Prostate gland (tissue), 2 donors: ENCODE measurements at regions of chr3 and their contacts with region 1.

Region 1: DNA sequence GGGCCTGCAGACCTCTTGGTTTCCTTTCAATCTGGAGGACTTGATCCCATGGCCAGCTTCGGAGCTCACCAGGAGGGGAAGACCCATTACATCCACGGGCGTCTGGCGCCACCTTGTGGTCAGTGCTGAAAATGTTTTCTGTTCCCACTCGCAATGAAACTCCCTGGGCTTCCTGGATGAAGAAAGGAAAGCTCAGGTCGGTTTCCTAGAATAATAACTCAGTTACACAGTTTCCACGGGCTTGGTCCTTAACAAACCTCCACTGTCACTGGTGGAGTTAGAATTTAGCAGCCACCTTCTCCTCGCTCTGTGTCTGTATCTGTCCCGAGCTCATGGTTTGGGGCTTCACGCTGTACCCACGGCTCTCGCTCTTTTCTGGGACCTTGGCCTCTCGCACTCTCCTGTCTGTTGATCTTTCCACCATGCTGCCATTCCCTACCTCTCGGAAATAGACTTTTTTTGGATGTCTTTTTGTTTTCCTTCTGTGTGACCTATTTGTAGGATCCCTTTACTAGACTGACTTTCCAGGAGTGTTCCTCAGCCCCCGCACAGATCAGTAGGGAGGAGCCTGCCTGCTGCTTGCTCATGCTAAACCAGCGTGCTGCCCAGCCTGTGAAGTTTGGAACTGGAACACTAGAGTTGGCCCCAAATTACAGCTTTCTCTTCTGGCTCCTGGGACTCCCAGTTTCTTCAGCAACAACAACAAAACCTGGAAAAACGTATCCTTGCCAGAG is 56.3 kb downstream of the IL20RB start:
- DNase-seq: peak; percentile 92
- H3K4me3 ChIP-seq: peak overlapping the region; percentile 23 to 35
- H3K27ac ChIP-seq: peak overlapping the region; percentile 64 to 65
- H3K4me1 ChIP-seq: no peaks in the 10 kb centered on the region
- H3K27me3 ChIP-seq: no peaks in the 10 kb centered on the region
- CTCF ChIP-seq: peak; percentile 88 to 98 (median 95)
- POLR2A ChIP-seq: no peak

Region 2: GRCh38 chr3:135965506-135966270 is 1048.4 kb before region 1 on chr3 and contains the start of gene PPP2R3A:
- intact Hi-C with region 1: loop called (anchors 10 kb)
- DNase-seq: peak; percentile 74
- H3K4me3 ChIP-seq: peak within 1 kb of the TSS; percentile 70 to 79
- H3K27ac ChIP-seq: peak within 1 kb of the TSS; percentile 89 to 93
- H3K4me1 ChIP-seq: no peaks in the 10 kb centered on the region
- H3K27me3 ChIP-seq: no peaks in the 10 kb centered on the region
- CTCF ChIP-seq: peak in 1 of 4 experiments; percentile 1
- POLR2A ChIP-seq: peak; percentile 60
- total RNA-seq, gene PPP2R3A: 9.0 to 25.9 TPM

Region 3: GRCh38 chr3:136075218-136075808 is 938.8 kb before region 1 on chr3:
- intact Hi-C with region 1: loop called (anchors 5 kb)
- DNase-seq: peak; percentile 69
- H3K4me3 ChIP-seq: no peak overlapping the region
- H3K27ac ChIP-seq: no peak overlapping the region
- H3K4me1 ChIP-seq: no peaks in the 10 kb centered on the region
- H3K27me3 ChIP-seq: no peaks in the 10 kb centered on the region
- CTCF ChIP-seq: peak; percentile 85 to 93 (median 91)
- POLR2A ChIP-seq: no peak

Region 4: GRCh38 chr3:136396916-136397315 is 617.2 kb before region 1 on chr3:
- intact Hi-C with region 1: loop called (anchors 10 kb)
- DNase-seq: no peak
- H3K4me3 ChIP-seq: no peak overlapping the region
- H3K27ac ChIP-seq: no peak overlapping the region
- H3K4me1 ChIP-seq: no peaks in the 10 kb centered on the region
- H3K27me3 ChIP-seq: no peaks in the 10 kb centered on the region
- CTCF ChIP-seq: no peak
- POLR2A ChIP-seq: no peak

Region 5: GRCh38 chr3:136545664-136546268 is 468.4 kb before region 1 on chr3:
- intact Hi-C with region 1: loop called (anchors 10 kb)
- DNase-seq: no peak
- H3K4me3 ChIP-seq: no peak overlapping the region
- H3K27ac ChIP-seq: no peak overlapping the region
- H3K4me1 ChIP-seq: no peaks in the 10 kb centered on the region
- H3K27me3 ChIP-seq: no peaks in the 10 kb centered on the region
- CTCF ChIP-seq: no peak
- POLR2A ChIP-seq: no peak

Region 6: GRCh38 chr3:136882572-136882971 is 131.6 kb before region 1 on chr3:
- intact Hi-C with region 1: no loop called
- DNase-seq: no peak
- H3K4me3 ChIP-seq: no peak overlapping the region
- H3K27ac ChIP-seq: no peak overlapping the region
- H3K4me1 ChIP-seq: peaks cover 5% of the 10 kb centered on the region
- H3K27me3 ChIP-seq: no peaks in the 10 kb centered on the region
- CTCF ChIP-seq: no peak
- POLR2A ChIP-seq: no peak

Region 7: GRCh38 chr3:137249311-137249940 is 235.3 kb after region 1 on chr3:
- intact Hi-C with region 1: no loop called
- DNase-seq: no peak
- H3K4me3 ChIP-seq: no peak overlapping the region
- H3K27ac ChIP-seq: no peak overlapping the region
- H3K4me1 ChIP-seq: no peaks in the 10 kb centered on the region
- H3K27me3 ChIP-seq: no peaks in the 10 kb centered on the region
- CTCF ChIP-seq: no peak
- POLR2A ChIP-seq: no peak